ENCODE measurements at regions of chr4 and their contacts with region 1.

Region 1: DNA sequence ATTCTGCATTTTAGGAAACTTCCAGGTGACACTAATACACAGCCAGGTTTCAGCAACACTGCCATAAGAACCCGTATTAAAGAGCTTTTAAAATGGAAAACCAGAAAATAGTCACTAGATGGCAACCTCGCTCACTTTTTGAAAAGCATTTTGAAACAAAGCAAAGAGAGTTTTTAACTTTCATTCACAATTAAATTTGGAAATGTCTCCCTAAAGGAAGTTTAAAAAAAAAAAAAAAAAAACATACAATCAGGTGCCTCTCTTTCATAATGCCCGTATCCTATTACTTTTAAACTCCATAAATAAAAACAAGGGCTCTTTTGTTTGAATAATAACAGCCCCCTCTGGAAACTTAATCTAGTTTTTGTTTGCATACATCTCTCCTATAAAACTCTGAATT is 20.3 kb downstream of the MEPE start:
- DNase-seq: no peak
- ATAC-seq: no peak
- H3K4me3 ChIP-seq: no peak overlapping the region
- H3K27ac ChIP-seq: no peak overlapping the region
- H3K4me1 ChIP-seq: no peaks in the 10 kb centered on the region
- H3K27me3 ChIP-seq: peaks cover 3% of the 10 kb centered on the region; the same call in 1 of the 2 replicates
- CTCF ChIP-seq: peak; percentile 50; the same call in 1 of the 2 replicates

Region 2: GRCh38 chr4:87425711-87426110 is 427.4 kb before region 1 on chr4:
- CTCF ChIA-PET with region 1: no interaction called
- POLR2A ChIA-PET with region 1: no interaction called
- in situ Hi-C with region 1: no loop called
- intact Hi-C with region 1: no loop called
- DNase-seq: no peak
- ATAC-seq: no peak
- H3K4me3 ChIP-seq: no peak overlapping the region
- H3K27ac ChIP-seq: no peak overlapping the region
- H3K4me1 ChIP-seq: peaks cover 14% of the 10 kb centered on the region
- H3K27me3 ChIP-seq: no peaks in the 10 kb centered on the region
- CTCF ChIP-seq: no peak

Region 3: GRCh38 chr4:87973283-87974169 is 120.4 kb after region 1 on chr4:
- CTCF ChIA-PET with region 1: interaction called, 17 read pairs
- POLR2A ChIA-PET with region 1: no interaction called
- in situ Hi-C with region 1: no loop called
- intact Hi-C with region 1: loop called (anchors 1 kb)
- DNase-seq: peak; percentile 18
- ATAC-seq: peak; percentile 77; the same call in 1 of the 2 replicates
- H3K4me3 ChIP-seq: no peak overlapping the region
- H3K27ac ChIP-seq: no peak overlapping the region
- H3K4me1 ChIP-seq: no peaks in the 10 kb centered on the region; the same call in 1 of the 2 replicates
- H3K27me3 ChIP-seq: peaks cover 6% of the 10 kb centered on the region; the same call in 1 of the 2 replicates
- CTCF ChIP-seq: peak; percentile 78

Measured in Panc1 (cell line).